Activated CD8-positive, alpha-beta T cell treated with anti-CD3 and anti-CD28 coated beads for 36 hours (primary cell): ENCODE measurements at regions of chr1 and their contacts with region 1.

Region 1: DNA sequence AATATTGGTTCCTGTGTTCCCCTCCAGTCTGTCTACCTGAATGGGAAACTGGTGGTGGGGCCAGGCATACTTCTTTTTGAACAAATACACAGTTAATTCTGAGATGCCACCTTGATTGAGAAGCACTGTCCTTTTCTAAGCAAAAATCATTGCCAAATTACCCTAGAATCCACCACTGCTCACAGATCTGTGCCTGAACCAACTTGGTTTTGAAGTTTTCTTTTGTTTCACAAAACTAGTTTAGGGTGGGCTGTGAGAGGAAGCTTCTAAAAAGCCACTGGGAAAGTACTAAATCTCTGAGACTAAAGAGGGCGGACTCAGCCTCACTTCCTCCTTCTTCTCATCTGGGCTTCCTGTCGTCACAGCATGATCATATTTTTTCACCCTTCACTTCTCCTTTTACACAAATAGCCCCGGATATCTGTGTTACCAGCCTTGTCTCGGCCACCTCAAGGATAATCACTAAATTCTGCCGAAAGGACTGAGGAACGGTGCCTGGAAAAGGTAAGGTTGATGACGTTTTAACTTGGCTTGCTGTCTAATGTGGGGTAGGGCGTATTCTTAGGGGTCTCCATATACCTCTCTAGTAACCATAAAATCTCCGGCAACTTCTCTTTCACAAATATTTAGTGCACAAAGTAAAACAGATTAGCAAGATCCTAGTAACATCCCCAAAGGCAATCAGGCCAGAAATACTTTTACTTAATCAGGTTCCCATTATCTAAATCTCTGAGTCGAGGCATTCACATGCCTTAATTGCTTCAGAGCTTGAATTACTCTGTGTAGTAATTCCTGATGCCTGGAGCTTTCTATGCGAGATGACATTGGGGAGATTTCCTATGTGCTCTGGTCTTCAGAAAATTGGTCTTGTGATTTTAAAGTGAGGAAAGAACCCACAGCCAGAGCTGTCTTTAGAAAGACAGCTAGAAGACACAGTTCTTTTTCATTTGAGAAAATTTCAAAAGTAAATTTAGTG is at the start of gene CD53:
- DNase-seq: peak; percentile 71
- ATAC-seq: peak; percentile 35
- H3K4me3 Mint-ChIP-seq: peak within 1 kb of the TSS; percentile 91
- H3K27ac Mint-ChIP-seq: peak within 1 kb of the TSS; percentile 99
- H3K4me1 Mint-ChIP-seq: peaks cover 31% of the 10 kb centered on the region
- H3K27me3 Mint-ChIP-seq: no peaks in the 10 kb centered on the region
- CTCF ChIP-seq: no peak
- total RNA-seq, gene CD53: 251 to 257 TPM

Region 2: DNA sequence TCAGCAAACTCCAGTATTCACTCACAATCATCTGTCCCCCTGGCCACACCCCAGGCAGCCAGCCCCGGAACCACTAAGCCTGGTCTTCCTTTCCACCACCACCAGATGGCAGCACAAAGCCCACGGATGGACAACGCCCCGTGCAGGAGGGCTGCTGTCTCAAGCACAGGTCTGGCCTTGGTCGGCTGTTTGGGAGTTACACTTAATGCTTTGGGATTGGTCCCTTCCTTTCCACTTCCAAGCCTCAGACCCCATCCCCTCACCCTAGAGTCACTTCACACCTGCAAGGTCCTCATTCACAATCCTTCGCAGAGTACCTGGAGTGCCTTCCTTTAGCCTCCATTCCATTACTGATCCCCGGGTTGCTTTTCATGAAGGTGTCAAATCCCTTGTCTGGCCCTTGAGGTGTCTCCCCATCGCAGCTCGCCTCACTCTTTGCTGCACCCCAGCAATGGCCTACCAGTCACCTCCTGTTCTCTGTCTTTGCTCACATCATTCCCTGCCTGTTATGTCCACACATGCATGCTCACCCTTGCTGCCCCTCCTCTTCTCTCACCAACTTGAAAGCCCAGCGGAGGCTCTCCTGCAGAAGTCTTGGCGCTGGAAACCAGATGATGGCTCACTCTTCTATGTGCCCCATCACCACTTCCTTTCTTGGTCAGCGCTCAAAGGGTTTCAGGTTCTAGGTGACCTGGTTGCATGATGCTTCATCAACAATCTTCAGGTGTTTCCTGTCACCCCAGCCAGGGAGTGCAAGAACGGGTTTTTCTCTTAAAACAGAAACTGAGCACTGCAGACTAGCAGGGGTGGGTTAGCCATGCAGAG is 242.0 kb before region 1 on chr1:
- CTCF ChIA-PET with region 1: no interaction called
- POLR2A ChIA-PET with region 1: no interaction called
- intact Hi-C with region 1: loop called (anchors 10 kb)
- DNase-seq: peak; percentile 89
- ATAC-seq: peak; percentile 69
- H3K4me3 Mint-ChIP-seq: no peak overlapping the region
- H3K27ac Mint-ChIP-seq: no peak overlapping the region
- H3K4me1 Mint-ChIP-seq: peaks cover 52% of the 10 kb centered on the region
- H3K27me3 Mint-ChIP-seq: no peaks in the 10 kb centered on the region
- CTCF ChIP-seq: peak; percentile 85

Region 3: DNA sequence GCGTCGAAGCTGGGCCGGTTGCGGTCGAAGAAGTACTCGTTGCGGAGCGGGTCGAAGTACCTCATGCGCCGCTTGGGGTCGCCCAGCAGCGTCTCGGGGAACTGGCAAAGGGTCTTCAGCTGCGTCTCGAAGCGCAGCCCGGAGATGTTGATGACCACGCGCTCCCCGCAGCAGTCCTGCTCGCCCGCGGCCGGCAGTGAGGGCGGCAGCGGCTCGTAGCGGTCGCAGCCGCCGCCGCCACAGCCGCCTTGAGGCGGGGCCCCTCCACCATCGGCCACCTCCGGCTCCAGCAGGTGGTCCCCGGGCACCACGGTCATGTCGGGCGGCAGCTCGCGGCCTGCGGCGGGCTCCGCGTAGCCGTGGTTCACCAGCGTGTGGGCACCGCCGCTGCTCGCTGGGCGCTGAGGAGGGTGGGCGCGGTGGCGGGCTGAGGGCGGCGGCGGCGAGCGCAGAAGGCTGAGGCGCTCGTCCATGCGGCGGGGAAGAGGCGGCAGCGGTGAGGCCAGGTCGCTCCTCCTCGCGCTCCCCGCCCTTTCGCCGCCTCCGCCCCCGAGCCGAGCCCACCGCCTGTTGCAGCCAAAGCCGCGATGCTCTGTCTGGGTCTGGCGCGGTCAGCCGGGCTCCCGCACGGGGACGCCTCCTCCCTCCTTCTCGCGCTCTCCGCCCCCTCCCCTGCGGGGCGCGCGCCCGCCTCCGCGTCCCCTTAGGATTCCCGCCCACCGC is 198.5 kb before region 1 on chr1 and contains the start of gene KCNA3:
- CTCF ChIA-PET with region 1: interaction called, 3 read pairs
- POLR2A ChIA-PET with region 1: interaction called, 22 read pairs
- intact Hi-C with region 1: loop called (anchors 10 kb)
- DNase-seq: peak; percentile 74
- ATAC-seq: peak; percentile 28
- H3K4me3 Mint-ChIP-seq: peak within 1 kb of the TSS; percentile 100
- H3K27ac Mint-ChIP-seq: peak within 1 kb of the TSS; percentile 98
- H3K4me1 Mint-ChIP-seq: peaks cover 30% of the 10 kb centered on the region
- H3K27me3 Mint-ChIP-seq: no peaks in the 10 kb centered on the region
- CTCF ChIP-seq: peak; percentile 47
- total RNA-seq, gene KCNA3: 15.5 to 16.2 TPM

Region 4: GRCh38 chr1:110857964-110858948 is 14.8 kb before region 1 on chr1:
- CTCF ChIA-PET with region 1: interaction called, 12 read pairs
- POLR2A ChIA-PET with region 1: interaction called, 15 read pairs
- intact Hi-C with region 1: no loop called
- DNase-seq: peak; percentile 35
- ATAC-seq: peak; percentile 90
- H3K4me3 Mint-ChIP-seq: no peak overlapping the region
- H3K27ac Mint-ChIP-seq: no peak overlapping the region
- H3K4me1 Mint-ChIP-seq: peaks cover 32% of the 10 kb centered on the region
- H3K27me3 Mint-ChIP-seq: no peaks in the 10 kb centered on the region
- CTCF ChIP-seq: no peak

Region 5: GRCh38 chr1:110890474-110891196 is 17.6 kb after region 1 on chr1:
- CTCF ChIA-PET with region 1: interaction called, 4 read pairs
- POLR2A ChIA-PET with region 1: interaction called, 65 read pairs
- intact Hi-C with region 1: no loop called
- DNase-seq: no peak
- ATAC-seq: peak; percentile 50
- H3K4me3 Mint-ChIP-seq: peak overlapping the region; percentile 41
- H3K27ac Mint-ChIP-seq: peak overlapping the region; percentile 81
- H3K4me1 Mint-ChIP-seq: peaks cover 91% of the 10 kb centered on the region
- H3K27me3 Mint-ChIP-seq: no peaks in the 10 kb centered on the region
- CTCF ChIP-seq: no peak

Region 6: GRCh38 chr1:110896090-110896489 is 23.1 kb after region 1 on chr1:
- CTCF ChIA-PET with region 1: no interaction called
- POLR2A ChIA-PET with region 1: interaction called, 65 read pairs
- intact Hi-C with region 1: no loop called
- DNase-seq: no peak
- ATAC-seq: peak; percentile 54
- H3K4me3 Mint-ChIP-seq: no peak overlapping the region
- H3K27ac Mint-ChIP-seq: peak overlapping the region; percentile 92
- H3K4me1 Mint-ChIP-seq: peaks cover 78% of the 10 kb centered on the region
- H3K27me3 Mint-ChIP-seq: no peaks in the 10 kb centered on the region
- CTCF ChIP-seq: no peak

Region 7: GRCh38 chr1:110963691-110964399 is 90.8 kb after region 1 on chr1 and contains the start of gene LRIF1:
- CTCF ChIA-PET with region 1: interaction called, 4 read pairs
- POLR2A ChIA-PET with region 1: interaction called, 12 read pairs
- intact Hi-C with region 1: no loop called
- DNase-seq: peak; percentile 100
- ATAC-seq: peak; percentile 97
- H3K4me3 Mint-ChIP-seq: peak within 1 kb of the TSS; percentile 84
- H3K27ac Mint-ChIP-seq: peak within 1 kb of the TSS; percentile 97
- H3K4me1 Mint-ChIP-seq: peaks cover 37% of the 10 kb centered on the region
- H3K27me3 Mint-ChIP-seq: peaks cover 7% of the 10 kb centered on the region
- CTCF ChIP-seq: peak; percentile 64
- total RNA-seq, gene LRIF1: 16.0 to 16.1 TPM